ENCODE measurements at regions of chr22 and their contacts with region 1.

Region 1: GRCh38 chr22:50293441-50294318 is 13.8 kb downstream of the PLXNB2 start:
- DNase-seq: peak; percentile 71 to 75
- ATAC-seq: peak; percentile 75 to 91 (median 82)
- H3K4me3 ChIP-seq: peak overlapping the region in 9 of 10 donors; percentile 3 to 44 (median 35)
- H3K27ac ChIP-seq: peak overlapping the region; percentile 39 to 96 (median 90)
- H3K4me1 ChIP-seq: peaks cover 37 to 69% (median 53%) of the 10 kb centered on the region in 9 donors
- H3K27me3 ChIP-seq: peaks cover 0 to 10% (median 0%) of the 10 kb centered on the region in 7 donors
- CTCF ChIP-seq: no peak

Region 2: GRCh38 chr22:50105208-50106100 is 188.2 kb before region 1 on chr22:
- intact Hi-C with region 1: no loop called
- DNase-seq: no peak
- ATAC-seq: peak in 1 of 8 donors; percentile 38
- H3K4me3 ChIP-seq: no peak overlapping the region
- H3K27ac ChIP-seq: no peak overlapping the region
- H3K4me1 ChIP-seq: peaks cover 0 to 10% (median 0%) of the 10 kb centered on the region in 9 donors
- H3K27me3 ChIP-seq: peaks cover 0 to 16% (median 0%) of the 10 kb centered on the region in 7 donors
- CTCF ChIP-seq: no peak

Region 3: DNA sequence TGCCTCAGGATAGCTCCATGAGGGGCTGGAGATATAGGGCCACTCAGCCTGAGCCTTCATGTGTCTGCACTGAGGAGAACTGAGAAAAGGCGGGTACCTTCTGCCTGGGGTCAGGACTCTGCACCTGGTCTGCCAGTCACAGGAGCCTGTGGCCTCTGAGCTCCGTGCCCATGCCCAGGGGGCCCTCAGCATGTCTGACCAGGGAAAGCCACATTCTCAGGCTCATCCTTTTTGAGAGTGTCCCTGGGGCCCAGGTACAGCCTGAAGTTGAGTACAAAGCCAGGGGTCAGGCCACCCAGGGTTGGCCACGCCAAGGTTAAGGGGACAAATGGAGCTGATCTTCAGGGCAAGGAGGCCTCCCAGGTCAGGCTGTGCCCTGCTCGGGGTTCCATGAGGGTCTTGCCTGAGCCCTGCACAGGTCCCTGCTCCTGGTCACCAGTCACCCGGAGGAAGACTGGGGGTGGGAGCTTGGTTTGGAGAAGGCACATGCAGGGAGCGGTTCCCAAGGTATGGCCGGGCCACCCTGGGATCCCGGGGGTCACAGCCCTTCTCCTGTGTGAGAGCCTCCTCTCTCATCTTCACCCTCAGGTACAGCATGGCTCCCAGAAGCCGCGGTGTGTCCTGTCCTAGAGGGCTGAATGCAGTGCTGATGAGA is 27.1 kb after region 1 on chr22:
- intact Hi-C with region 1: loop called in 3 of 10 experiments (anchors 5 kb)
- DNase-seq: no peak
- ATAC-seq: no peak
- H3K4me3 ChIP-seq: no peak overlapping the region
- H3K27ac ChIP-seq: no peak overlapping the region
- H3K4me1 ChIP-seq: peaks cover 0 to 4% (median 0%) of the 10 kb centered on the region in 9 donors
- H3K27me3 ChIP-seq: no peaks in the 10 kb centered on the region
- CTCF ChIP-seq: no peak